Activated B cell treated with CpG ODN at 0.5 μM for 24 hours (primary cell): ENCODE measurements at regions of chr3 and their contacts with region 1.

Region 1: DNA sequence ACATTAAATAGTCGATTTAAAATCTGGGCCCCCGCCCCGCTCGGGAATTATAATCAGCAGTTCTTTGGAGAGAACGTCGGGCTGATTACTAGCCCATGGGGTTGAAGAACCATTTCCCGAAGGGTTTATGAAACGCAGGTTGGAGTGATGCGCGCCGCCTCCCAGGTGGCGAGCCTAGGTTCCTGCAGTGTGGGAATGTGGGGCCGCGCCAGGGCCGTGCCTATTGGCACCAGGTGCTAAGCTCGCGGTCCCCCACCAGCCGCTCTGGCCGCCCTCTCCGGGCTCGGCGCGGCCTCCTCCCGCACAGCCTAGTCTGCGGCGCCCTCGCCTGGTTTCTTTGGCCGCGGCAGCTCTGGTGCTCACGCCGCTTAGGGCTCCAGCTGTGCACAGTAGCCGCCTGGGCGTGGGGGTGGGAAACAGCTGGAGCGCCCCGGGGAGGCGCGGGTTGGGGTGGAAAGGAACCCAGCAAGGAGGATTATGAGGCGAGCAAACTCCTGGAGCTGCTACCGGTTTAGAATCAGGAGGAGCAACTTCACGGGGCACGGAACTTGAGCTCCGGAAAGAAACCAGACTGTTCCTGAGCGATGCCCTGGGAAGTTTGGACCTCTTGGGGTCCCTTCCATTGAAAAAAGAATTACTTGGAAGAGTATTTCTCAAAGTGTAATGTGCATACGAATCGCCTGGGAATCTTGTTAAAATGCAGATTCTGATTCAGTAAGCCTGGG is 5.6 kb upstream of the MECOM start:
- DNase-seq: peak; percentile 53
- ATAC-seq: peak; percentile 81
- H3K4me3 Mint-ChIP-seq: peak overlapping the region; percentile 54
- H3K27ac Mint-ChIP-seq: no peak overlapping the region
- H3K4me1 Mint-ChIP-seq: peaks cover 21% of the 10 kb centered on the region
- H3K27me3 Mint-ChIP-seq: peaks cover 81% of the 10 kb centered on the region
- CTCF ChIP-seq: no peak

Region 2: DNA sequence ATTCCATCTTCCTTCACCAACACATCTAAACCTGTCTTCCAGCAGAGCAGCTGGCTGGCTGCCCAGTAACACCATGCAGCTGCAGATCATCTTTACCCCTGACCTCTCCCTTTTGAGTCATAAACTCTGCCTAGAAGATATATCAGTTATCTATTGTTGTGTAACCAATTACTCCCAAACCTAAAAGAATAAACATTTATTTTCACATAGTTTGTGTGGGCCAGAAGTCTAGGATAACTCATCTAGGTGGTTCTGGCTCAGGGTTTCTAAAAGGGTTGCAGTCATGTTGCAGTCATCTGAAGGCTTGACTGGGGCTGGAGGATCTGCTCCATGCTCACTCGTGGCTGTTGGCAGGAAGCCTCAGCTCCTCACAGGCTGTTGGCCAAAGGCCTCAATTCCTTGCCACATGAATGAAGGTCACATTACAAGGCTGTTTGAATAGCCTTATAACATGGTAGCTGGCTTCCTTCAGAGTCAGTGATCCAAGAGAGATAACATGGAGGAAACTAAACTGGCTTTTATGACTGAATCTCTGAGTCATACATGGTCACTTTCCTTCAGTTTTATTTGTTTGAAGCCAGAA is 1666.2 kb before region 1 on chr3:
- CTCF ChIA-PET with region 1: no interaction called
- POLR2A ChIA-PET with region 1: no interaction called
- intact Hi-C with region 1: no loop called
- DNase-seq: no peak
- ATAC-seq: no peak
- H3K4me3 Mint-ChIP-seq: no peak overlapping the region
- H3K27ac Mint-ChIP-seq: no peak overlapping the region
- H3K4me1 Mint-ChIP-seq: no peaks in the 10 kb centered on the region
- H3K27me3 Mint-ChIP-seq: no peaks in the 10 kb centered on the region
- CTCF ChIP-seq: no peak

Region 3: DNA sequence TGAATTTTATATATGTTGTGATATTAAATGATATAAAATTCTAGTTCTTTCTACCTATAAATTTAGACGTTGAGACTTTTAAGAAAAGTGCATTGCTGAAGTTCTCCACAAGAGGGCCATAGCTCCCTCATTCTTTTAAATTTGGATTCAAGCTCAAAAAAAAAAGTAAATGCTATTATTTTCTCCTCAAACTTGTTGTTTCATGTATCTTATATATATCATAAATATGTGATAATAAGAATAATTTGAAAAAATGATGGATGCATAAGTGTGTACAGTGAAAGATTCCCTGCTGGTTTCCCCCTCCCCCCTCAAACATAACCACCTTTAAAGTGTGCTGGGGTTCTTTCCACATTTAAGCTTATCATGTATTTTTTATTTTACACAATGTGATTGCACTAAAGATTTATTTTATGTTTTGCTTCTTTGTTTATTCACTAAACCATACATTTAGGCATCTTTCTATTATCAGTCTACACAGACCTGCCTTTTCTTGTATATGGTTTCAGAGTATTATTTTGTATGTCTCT is 804.0 kb before region 1 on chr3:
- CTCF ChIA-PET with region 1: interaction called, 21 read pairs
- POLR2A ChIA-PET with region 1: no interaction called
- intact Hi-C with region 1: loop called (anchors 2 kb)
- DNase-seq: no peak
- ATAC-seq: no peak
- H3K4me3 Mint-ChIP-seq: no peak overlapping the region
- H3K27ac Mint-ChIP-seq: no peak overlapping the region
- H3K4me1 Mint-ChIP-seq: no peaks in the 10 kb centered on the region
- H3K27me3 Mint-ChIP-seq: no peaks in the 10 kb centered on the region
- CTCF ChIP-seq: no peak

Region 4: DNA sequence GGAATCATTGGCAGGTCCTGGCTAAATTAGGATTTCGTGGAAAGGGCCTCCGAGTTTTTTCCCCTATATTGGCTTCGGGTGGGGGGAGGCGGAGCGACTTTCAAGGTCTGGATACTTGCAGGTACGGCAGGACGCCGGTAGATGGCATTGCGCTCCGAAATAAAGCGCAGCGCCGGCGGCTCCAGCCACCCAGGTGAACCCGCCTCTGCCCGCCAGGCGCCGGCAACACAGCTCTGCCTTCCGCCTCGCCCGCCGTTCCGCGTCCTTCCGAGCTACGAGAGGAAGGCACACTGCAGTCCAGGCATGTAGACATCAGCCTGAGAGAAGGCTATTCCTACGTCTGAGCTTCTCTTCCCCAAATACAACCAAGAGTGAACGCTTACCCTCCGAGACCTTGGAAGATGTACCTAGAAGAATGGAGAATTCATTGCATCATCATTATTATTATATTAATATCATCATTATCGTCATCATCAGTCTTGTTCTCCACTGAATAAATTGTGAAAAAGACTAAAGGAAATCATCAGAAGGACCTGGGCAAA is 519.7 kb before region 1 on chr3:
- CTCF ChIA-PET with region 1: interaction called, 28 read pairs
- POLR2A ChIA-PET with region 1: interaction called, 3 read pairs
- intact Hi-C with region 1: loop called (anchors 1 kb)
- DNase-seq: peak; percentile 58
- ATAC-seq: peak; percentile 95
- H3K4me3 Mint-ChIP-seq: peak overlapping the region; percentile 53
- H3K27ac Mint-ChIP-seq: no peak overlapping the region
- H3K4me1 Mint-ChIP-seq: peaks cover 23% of the 10 kb centered on the region
- H3K27me3 Mint-ChIP-seq: peaks cover 49% of the 10 kb centered on the region
- CTCF ChIP-seq: no peak

Region 5: GRCh38 chr3:169562992-169563774 is 105.9 kb before region 1 on chr3:
- CTCF ChIA-PET with region 1: no interaction called
- POLR2A ChIA-PET with region 1: no interaction called
- intact Hi-C with region 1: loop called (anchors 2 kb)
- DNase-seq: no peak
- ATAC-seq: peak; percentile 49
- H3K4me3 Mint-ChIP-seq: no peak overlapping the region
- H3K27ac Mint-ChIP-seq: no peak overlapping the region
- H3K4me1 Mint-ChIP-seq: no peaks in the 10 kb centered on the region
- H3K27me3 Mint-ChIP-seq: no peaks in the 10 kb centered on the region
- CTCF ChIP-seq: no peak